ENCODE measurements at regions of chr1 and their contacts with region 1.

Region 1: DNA sequence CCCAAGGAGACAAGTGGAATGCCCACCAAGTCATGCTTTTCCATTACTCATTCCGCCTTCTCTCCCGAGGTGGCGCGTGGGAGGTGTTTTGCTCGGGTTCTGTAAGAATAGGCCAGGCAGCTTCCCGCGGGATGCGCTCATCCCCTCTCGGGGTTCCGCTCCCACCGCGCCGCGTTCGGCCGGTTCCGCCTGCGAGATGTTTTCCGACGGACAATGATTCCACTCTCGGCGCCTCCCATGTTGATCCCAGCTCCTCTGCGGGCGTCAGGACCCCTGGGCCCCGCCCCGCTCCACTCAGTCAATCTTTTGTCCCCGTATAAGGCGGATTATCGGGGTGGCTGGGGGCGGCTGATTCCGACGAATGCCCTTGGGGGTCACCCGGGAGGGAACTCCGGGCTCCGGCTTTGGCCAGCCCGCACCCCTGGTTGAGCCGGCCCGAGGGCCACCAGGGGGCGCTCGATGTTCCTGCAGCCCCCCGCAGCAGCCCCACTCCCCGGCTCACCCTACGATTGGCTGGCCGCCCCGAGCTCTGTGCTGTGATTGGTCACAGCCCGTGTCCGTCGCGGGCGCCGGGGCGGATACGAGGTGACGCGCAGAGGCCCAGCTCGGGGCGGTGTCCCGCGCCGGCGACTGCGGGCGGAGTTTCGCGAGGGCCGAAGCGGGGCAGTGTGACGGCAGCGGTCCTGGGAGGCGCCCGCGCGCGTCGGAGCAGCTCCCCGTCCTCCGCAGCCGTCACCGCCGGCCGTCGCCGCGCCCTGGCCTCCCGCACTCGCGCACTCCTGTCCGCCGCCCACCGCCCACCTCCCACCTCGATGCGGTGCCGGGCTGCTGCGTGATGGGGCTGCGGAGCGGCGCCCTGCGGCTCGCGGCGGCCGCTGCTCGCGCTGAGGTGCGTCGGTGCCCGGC is at the start of gene KIF1B:
- DNase-seq: peak; percentile 99 to 100 (median 99)
- ATAC-seq: peak; percentile 96 to 99 (median 98)
- H3K4me3 ChIP-seq: peak within 1 kb of the TSS; percentile 80 to 97 (median 94)
- H3K27ac ChIP-seq: peak within 1 kb of the TSS; percentile 97 to 100 (median 99)
- H3K4me1 ChIP-seq: peaks cover 0 to 44% (median 31%) of the 10 kb centered on the region in 12 donors
- H3K27me3 ChIP-seq: no peaks in the 10 kb centered on the region
- CTCF ChIP-seq: peak; percentile 98 to 100 (median 98)
- POLR2A ChIP-seq: peak; percentile 97 to 99
- total RNA-seq, gene KIF1B: 65.5 to 137 (median 82.0) TPM

Region 2: DNA sequence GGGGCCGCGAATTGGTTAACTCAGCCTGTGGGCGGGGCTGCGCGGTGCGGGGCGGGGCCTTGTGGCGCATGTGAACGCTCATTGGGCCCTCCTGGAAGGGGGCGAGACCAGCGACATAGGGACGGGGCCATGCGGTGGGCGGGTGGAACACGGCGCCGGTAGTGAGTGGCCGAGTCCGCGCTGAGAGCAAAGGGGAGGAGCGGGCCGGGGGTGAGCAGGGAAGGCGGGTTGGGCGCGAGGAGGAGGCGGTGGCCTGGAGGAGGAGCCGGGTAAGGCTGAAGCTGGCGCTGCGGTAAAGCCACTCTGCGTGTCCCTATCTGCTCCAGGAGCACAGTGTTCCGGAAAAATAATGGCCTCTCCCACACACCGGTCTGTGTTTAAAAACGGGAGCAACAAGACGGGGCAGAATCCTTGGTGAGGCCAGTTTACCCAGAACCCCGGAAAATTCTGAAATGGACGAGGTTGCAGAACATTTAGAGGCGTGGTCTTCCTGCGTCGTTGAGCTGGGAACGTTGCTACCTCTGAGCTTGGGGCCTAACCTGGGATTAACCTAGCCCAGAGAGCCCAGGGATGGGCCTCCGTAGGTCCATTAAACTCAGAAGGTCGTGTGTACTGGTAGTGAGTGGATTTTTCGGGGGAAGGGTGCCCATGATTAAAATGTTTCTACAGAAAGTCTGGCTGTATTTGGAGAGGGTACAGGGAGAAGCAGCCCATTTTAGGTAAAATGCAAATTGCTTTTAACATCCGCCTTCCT is 299.6 kb before region 1 on chr1:
- intact Hi-C with region 1: loop called in 1 of 10 experiments (anchors 1 kb)
- DNase-seq: peak; percentile 100
- ATAC-seq: peak; percentile 97 to 99 (median 98)
- H3K4me3 ChIP-seq: peak overlapping the region in 11 of 12 donors; percentile 47 to 85 (median 62)
- H3K27ac ChIP-seq: peak overlapping the region; percentile 86 to 98 (median 92)
- H3K4me1 ChIP-seq: peaks cover 0 to 56% (median 27%) of the 10 kb centered on the region in 12 donors
- H3K27me3 ChIP-seq: no peaks in the 10 kb centered on the region
- CTCF ChIP-seq: no peak
- POLR2A ChIP-seq: peak in 1 of 2 donors; percentile 90

Region 3: GRCh38 chr1:10152709-10153284 is 57.4 kb before region 1 on chr1:
- intact Hi-C with region 1: loop called in 1 of 10 experiments (anchors 5 kb)
- DNase-seq: peak in 3 of 5 donors; percentile 30 to 39 (median 34)
- ATAC-seq: peak in 2 of 4 donors; percentile 40 to 47
- H3K4me3 ChIP-seq: no peak overlapping the region
- H3K27ac ChIP-seq: peak overlapping the region in 2 of 12 donors; percentile 13 to 85
- H3K4me1 ChIP-seq: peaks cover 0 to 28% (median 1%) of the 10 kb centered on the region in 12 donors
- H3K27me3 ChIP-seq: no peaks in the 10 kb centered on the region
- CTCF ChIP-seq: peak; percentile 18 to 65 (median 46)
- POLR2A ChIP-seq: no peak

Region 4: DNA sequence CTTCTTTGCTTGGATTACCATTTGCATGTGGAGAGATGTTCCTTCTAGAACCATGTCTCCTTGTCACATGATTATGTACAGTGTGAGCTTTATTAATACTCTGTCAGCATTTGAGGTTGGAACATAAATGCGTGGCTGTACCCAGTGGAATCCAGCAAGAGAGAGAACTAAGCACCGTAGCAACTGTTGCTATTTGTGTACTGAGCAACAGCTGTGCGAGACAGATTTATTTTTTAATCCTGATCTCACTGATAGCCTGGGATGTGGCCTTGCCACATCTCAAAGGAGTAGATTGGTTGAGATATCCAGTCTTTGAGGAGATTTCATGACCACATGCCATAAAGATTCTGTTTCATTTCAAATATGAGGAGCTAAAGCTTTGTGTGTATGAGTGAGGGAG is 43.6 kb after region 1 on chr1:
- intact Hi-C with region 1: loop called in 6 of 10 experiments (anchors 5 kb)
- DNase-seq: no peak
- ATAC-seq: peak; percentile 93 to 95 (median 94)
- H3K4me3 ChIP-seq: no peak overlapping the region
- H3K27ac ChIP-seq: peak overlapping the region; percentile 8 to 67 (median 56)
- H3K4me1 ChIP-seq: peaks cover 7 to 66% (median 35%) of the 10 kb centered on the region in 12 donors
- H3K27me3 ChIP-seq: no peaks in the 10 kb centered on the region
- CTCF ChIP-seq: no peak
- POLR2A ChIP-seq: no peak

Region 5: GRCh38 chr1:10267319-10267718 is 57.2 kb after region 1 on chr1:
- intact Hi-C with region 1: loop called in 4 of 10 experiments (anchors 5 to 10 kb)
- DNase-seq: peak in 1 of 5 donors; percentile 47
- ATAC-seq: peak in 3 of 4 donors; percentile 59 to 88 (median 87)
- H3K4me3 ChIP-seq: no peak overlapping the region
- H3K27ac ChIP-seq: peak overlapping the region in 5 of 12 donors; percentile 8 to 39 (median 25)
- H3K4me1 ChIP-seq: peaks cover 0 to 23% (median 4%) of the 10 kb centered on the region in 12 donors
- H3K27me3 ChIP-seq: no peaks in the 10 kb centered on the region
- CTCF ChIP-seq: no peak
- POLR2A ChIP-seq: no peak

Region 6: DNA sequence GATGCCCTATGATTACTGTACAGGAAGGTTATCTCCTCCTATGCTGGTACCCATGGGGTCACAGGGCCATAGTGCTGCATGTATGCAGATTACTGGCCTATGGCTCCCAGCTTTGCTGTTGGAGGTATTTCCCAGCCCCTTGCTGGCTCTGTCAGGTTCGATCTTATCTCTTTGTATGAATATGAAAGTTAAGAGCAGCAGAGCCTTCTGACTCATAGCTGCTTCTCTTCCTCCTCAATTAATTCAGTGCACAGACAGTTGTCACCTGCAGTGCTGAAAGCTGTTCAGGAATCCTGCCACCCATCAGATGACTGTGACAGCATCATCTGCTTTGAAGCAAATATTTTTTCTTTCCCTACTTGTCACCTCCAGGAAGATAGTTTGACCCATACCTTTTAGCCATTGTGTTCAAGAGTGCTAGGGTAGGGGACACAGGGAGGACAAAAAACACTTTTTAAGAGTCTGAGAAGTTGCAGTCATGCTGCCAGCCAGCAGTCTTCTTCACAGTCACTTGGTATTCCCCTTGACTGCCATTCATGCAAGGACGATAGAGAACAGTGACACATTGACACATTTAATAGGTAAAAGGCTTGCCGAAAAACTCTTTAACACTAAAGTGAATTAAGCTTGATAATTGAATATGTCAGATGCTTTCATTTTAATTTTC is 73.3 kb after region 1 on chr1:
- intact Hi-C with region 1: loop called in 6 of 10 experiments (anchors 5 to 10 kb)
- DNase-seq: no peak
- ATAC-seq: no peak
- H3K4me3 ChIP-seq: no peak overlapping the region
- H3K27ac ChIP-seq: peak overlapping the region in 4 of 12 donors; percentile 4 to 74 (median 13)
- H3K4me1 ChIP-seq: peaks cover 3 to 40% (median 24%) of the 10 kb centered on the region in 12 donors
- H3K27me3 ChIP-seq: no peaks in the 10 kb centered on the region
- CTCF ChIP-seq: no peak
- POLR2A ChIP-seq: no peak

Region 7: GRCh38 chr1:10338047-10338446 is 127.9 kb after region 1 on chr1:
- intact Hi-C with region 1: loop called (anchors 1 to 5 kb)
- DNase-seq: peak in 4 of 5 donors; percentile 33 to 54 (median 43)
- ATAC-seq: peak; percentile 83 to 91 (median 86)
- H3K4me3 ChIP-seq: no peak overlapping the region
- H3K27ac ChIP-seq: peak overlapping the region in 2 of 12 donors; percentile 36 to 48
- H3K4me1 ChIP-seq: peaks cover 0 to 25% (median 12%) of the 10 kb centered on the region in 12 donors
- H3K27me3 ChIP-seq: no peaks in the 10 kb centered on the region
- CTCF ChIP-seq: peak; percentile 48 to 78 (median 72)
- POLR2A ChIP-seq: no peak

Measured in heart left ventricle (tissue), 16 donors.